Vagina (tissue), 2 donors: ENCODE measurements at regions of chr7 and their contacts with region 1.

Region 1: DNA sequence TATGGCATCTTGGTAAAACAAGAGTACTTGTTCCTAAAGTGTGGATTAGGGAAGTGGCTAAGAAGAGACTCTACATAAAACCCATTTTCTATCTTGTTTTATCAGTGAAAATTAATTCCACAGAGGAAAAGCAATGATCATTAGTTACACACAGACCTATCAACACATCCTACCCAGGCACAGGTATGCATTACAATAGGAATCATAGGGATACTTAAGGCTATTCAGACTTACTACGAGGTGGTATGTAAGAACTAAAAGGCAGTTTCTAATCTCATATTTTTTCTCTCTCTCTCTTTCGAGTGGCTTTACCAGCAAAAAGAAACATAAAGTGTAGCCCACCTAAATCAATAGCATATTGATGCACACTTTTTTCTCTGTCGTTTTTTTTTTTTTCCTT is 166.3 kb upstream of the FEZF1 start:
- DNase-seq: no peak
- H3K4me3 ChIP-seq: no peak overlapping the region
- H3K27ac ChIP-seq: no peak overlapping the region
- H3K4me1 ChIP-seq: no peaks in the 10 kb centered on the region
- H3K27me3 ChIP-seq: no peaks in the 10 kb centered on the region
- CTCF ChIP-seq: no peak
- POLR2A ChIP-seq: no peak

Region 2: GRCh38 chr7:121126801-121127534 is 1343.9 kb before region 1 on chr7:
- intact Hi-C with region 1: no loop called
- DNase-seq: no peak
- H3K4me3 ChIP-seq: no peak overlapping the region
- H3K27ac ChIP-seq: no peak overlapping the region
- H3K4me1 ChIP-seq: no peaks in the 10 kb centered on the region
- H3K27me3 ChIP-seq: no peaks in the 10 kb centered on the region
- CTCF ChIP-seq: peak in 1 of 3 experiments; percentile 11
- POLR2A ChIP-seq: no peak

Region 3: DNA sequence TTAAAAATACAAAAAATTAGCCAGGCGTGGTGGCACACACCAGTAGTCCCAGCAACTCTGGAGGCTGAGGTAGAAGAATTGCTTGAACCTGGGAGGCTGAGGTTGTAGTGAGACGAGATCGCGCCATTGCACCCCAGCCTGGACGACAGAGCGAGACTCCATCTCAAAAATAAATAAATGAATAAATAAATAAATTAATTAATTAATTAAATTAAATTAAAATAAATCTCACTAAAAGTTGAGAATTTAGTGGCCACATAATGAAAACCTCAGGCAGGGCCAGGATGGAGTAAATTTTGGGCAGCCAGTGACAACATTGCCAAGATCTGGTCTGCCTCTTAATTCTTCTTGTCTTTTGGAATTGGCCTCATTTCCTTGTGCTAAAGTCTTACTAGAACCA is 21.1 kb after region 1 on chr7:
- intact Hi-C with region 1: loop called (anchors 2 kb)
- DNase-seq: no peak
- H3K4me3 ChIP-seq: no peak overlapping the region
- H3K27ac ChIP-seq: no peak overlapping the region
- H3K4me1 ChIP-seq: no peaks in the 10 kb centered on the region
- H3K27me3 ChIP-seq: no peaks in the 10 kb centered on the region
- CTCF ChIP-seq: no peak
- POLR2A ChIP-seq: no peak